Activated CD8-positive, alpha-beta T cell treated with anti-CD3 and anti-CD28 coated beads, Interleukin-2, amount 10 ng/mL, durations not matched to agents 7 days and 5 days (primary cell): ENCODE measurements at regions of chr5 and their contacts with region 1.

Region 1: DNA sequence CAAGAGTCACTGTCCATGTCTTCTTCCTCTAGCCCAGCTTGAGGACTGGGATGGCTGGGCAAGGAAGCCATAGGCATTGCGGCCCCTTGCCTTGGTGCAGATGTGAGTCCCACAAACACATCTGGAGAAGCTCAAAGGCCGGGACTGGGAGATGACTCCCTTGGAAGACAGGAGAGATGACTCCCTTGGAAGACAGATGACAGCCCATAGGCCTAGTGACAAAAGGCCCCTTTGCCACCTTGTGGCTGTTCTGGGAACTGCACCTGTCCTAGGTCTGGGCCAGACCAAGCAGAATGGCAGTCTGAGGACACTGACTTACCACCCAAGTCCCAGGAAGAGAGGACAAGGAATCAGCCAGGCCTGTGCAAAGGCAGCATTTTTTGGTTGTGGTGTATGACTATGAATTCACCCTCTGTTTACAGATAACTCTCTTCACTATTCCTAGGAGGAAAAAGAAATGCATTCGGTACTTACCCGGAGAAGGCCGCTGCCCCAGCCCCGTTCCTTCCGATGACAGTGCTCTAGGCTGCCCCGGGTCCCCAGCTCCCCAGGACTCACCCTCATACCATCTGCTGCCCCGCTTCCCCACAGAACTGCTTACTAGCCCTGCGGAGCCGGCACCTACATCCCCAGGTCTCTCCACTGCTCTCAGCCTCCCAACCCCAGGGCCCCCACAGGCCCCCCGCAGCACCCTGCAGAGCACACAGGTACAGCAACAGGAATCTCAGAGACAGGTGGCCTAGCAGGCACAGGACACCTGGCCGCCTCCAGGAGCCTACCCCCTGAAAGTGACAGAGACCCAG is 30.8 kb downstream of the SKP1 start:
- DNase-seq: peak; percentile 87
- ATAC-seq: peak; percentile 77
- H3K4me3 Mint-ChIP-seq: no peak overlapping the region
- H3K27ac Mint-ChIP-seq: no peak overlapping the region
- H3K4me1 Mint-ChIP-seq: peaks cover 31% of the 10 kb centered on the region
- H3K27me3 Mint-ChIP-seq: no peaks in the 10 kb centered on the region

Region 2: DNA sequence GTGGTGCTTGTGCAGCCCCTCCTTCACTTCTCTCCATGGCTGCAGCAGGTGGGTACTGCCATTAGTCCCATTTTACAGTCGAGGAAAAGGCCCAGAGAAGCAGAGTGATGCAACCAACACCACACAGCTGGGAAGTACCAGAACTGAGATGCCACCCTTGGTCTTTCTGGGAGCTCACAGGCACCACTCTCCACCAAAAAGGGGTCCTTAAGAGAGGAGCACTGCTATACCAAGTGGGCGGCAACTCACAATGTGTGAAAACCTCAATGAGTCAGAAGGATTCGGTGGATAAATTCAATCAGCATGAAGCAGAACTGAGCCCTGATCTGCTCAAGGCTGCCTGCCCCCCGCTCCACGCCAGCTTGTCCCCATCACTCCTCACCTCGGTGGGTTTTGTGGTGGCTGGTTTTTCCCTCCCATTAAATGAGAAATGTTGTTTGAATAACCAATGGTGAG is 747.3 kb before region 1 on chr5:
- CTCF ChIA-PET with region 1: no interaction called
- POLR2A ChIA-PET with region 1: no interaction called
- DNase-seq: peak; percentile 45
- ATAC-seq: peak; percentile 77
- H3K4me3 Mint-ChIP-seq: no peak overlapping the region
- H3K27ac Mint-ChIP-seq: no peak overlapping the region
- H3K4me1 Mint-ChIP-seq: peaks cover 31% of the 10 kb centered on the region
- H3K27me3 Mint-ChIP-seq: no peaks in the 10 kb centered on the region

Region 3: GRCh38 chr5:134026521-134027268 is 119.3 kb before region 1 on chr5:
- CTCF ChIA-PET with region 1: interaction called, 12 read pairs
- POLR2A ChIA-PET with region 1: interaction called, 5 read pairs
- DNase-seq: peak; percentile 68
- ATAC-seq: peak; percentile 96
- H3K4me3 Mint-ChIP-seq: no peak overlapping the region
- H3K27ac Mint-ChIP-seq: no peak overlapping the region
- H3K4me1 Mint-ChIP-seq: no peaks in the 10 kb centered on the region
- H3K27me3 Mint-ChIP-seq: peaks cover 9% of the 10 kb centered on the region

Region 4: DNA sequence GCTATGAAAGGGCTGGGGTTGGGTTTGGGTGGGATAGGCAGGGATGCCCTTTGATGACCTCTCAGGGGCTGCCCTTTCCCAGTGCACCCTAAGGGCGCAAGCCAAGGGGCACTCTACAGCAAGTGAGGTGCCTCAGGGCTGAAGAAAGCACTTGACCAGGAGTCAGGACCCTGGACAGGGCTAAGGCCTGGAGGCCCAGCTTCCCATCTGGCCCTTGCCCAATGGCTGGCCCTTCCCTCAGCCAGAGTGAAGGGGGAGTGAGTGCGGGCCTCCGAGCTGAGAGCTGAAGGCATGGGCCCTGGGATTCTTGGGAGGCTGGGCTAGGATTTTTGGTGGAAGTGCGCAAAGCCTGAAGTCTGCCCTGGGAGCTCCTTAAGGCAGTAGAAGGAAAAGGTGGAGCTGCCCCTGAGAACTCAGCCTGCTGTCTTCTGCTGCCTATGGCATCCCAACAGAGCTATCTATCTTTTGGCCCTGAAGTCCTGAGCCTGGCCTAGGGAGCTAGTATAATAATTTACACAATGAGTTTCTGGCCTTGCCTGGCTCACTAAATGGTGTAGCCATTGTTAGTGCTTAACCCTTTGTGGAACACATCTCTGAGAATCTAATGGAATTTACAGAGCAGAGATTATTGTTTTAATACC is 395.9 kb after region 1 on chr5:
- CTCF ChIA-PET with region 1: no interaction called
- POLR2A ChIA-PET with region 1: no interaction called
- DNase-seq: no peak
- ATAC-seq: no peak
- H3K4me3 Mint-ChIP-seq: no peak overlapping the region
- H3K27ac Mint-ChIP-seq: no peak overlapping the region
- H3K4me1 Mint-ChIP-seq: peaks cover 45% of the 10 kb centered on the region
- H3K27me3 Mint-ChIP-seq: no peaks in the 10 kb centered on the region